Posterior vena cava (tissue), 2 donors: ENCODE measurements at regions of chr21 and their contacts with region 1.

Region 1: DNA sequence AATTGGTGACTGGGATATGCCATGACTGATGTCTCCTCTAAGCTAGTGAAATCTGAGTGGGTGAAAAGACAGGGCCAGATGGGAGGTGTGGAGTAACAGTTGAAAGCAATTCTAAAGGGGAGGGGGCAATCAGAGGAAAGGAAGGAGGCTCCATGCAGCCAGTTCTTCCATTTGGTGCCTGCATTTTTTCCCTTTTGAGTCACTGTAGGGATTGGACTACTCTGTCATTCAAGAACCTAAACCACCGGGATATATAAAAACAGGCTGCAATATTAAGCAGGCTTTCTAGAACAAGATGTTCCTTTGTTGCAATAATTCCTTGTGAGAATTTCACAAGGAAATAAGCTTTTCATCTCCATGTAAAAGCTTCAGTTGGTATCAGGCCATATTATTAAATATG is 18.3 kb downstream of the CLIC6 start:
- DNase-seq: no peak

Region 2: DNA sequence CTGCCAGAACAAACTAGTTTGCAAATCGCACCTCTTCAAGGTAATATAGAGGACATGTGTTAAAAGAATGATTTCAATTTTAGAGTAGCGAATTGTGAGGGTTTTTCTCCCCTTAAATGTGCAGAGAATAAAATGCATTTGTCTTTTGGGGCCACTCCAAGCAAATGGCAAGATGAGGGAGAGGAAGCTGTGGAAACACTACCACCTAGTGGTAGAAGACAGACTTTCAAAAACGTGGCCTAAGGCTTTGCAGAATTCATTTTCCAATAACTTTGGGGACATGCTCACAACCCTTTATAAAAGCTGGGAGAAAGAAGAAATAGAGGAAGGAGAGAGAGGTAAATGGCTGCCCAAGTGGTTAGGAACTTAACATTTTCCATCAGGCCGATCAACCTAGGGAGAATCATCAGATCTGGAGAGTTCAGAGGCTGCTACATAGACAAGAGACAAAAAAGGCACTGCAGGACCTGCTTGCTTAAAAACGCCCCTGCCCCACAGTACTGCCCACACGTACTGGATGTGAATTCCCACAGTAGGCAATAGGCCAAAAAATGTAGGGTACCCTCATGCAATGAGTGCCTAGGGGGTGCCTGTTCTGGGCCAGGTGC is 56.4 kb before region 1 on chr21:
- intact Hi-C with region 1: no loop called
- DNase-seq: no peak

Region 3: DNA sequence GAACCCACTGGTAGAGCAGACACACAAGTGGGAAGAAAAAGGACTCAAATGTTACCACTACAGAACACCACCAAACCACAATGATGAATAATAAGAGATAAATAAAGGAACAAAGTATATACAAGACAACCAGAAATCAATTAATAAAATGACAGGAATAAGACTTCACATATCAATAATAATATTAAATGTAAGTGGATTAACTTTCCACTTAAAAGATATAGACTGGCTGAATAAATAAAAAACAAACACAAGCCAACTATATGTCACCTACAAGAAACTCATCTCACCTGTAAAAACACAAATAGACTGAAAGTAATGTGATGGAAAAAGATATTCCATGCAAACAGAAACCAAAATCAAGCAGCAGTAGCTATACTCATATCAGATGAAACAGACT is 25.2 kb before region 1 on chr21:
- intact Hi-C with region 1: loop called in 1 of 2 experiments (anchors 1 kb)
- DNase-seq: no peak